HepG2 (cell line): ENCODE measurements at regions of chr21 and their contacts with region 1.

Region 1: DNA sequence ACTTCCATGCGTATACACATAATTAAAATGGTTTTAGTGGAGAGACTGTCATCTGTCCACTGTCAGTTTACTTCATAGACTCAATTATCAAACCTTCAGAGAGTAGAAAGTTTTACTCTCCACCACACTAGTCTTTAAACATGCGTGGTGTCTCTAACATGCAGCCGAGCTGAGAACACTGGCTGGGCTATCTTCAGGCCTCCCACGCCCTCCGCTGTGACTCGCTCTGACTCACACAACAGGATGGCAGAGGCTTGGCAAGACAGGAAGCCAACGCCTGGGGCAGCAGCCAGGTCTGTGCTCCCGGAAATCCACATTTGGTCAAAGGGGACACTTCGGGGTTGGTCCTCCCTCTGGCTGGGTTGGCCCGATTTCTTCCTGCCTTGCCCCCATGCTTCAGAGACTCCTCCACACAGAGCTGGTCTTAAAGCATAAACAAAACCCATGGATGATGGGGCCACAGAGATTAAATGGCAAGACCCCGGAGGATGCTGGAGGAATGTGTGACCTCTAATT is 22.7 kb upstream of the IFNGR2 start:
- DNase-seq: peak; percentile 75
- ATAC-seq: peak; percentile 72
- H3K4me3 ChIP-seq: peak overlapping the region in 1 of 3 experiments; percentile 15; a peak in 1 of 6 replicates
- H3K27ac ChIP-seq: no peak overlapping the region
- H3K4me1 ChIP-seq: peaks cover 57% of the 10 kb centered on the region
- H3K27me3 ChIP-seq: no peaks in the 10 kb centered on the region
- CTCF ChIP-seq: no peak
- EP300 ChIP-seq: 0 out of 4 replicates have a peak, but pooled peaks of 1 of the 2 experiments have one; percentile 6
- POLR2A ChIP-seq: no peak
- RAD21 ChIP-seq: no peak

Region 2: GRCh38 chr21:33403779-33404585 is 23.4 kb after region 1 on chr21:
- CTCF ChIA-PET with region 1: no interaction called
- POLR2A ChIA-PET with region 1: interaction called, 18 read pairs
- in situ Hi-C with region 1: no loop called
- intact Hi-C with region 1: loop called (anchors 1 kb)
- DNase-seq: peak; percentile 26
- ATAC-seq: peak; percentile 76
- H3K4me3 ChIP-seq: peak overlapping the region; percentile 85 to 97 (median 95)
- H3K27ac ChIP-seq: peak overlapping the region; percentile 79
- H3K4me1 ChIP-seq: peaks cover 53% of the 10 kb centered on the region
- H3K27me3 ChIP-seq: no peaks in the 10 kb centered on the region; a peak in 1 of 5 replicates
- CTCF ChIP-seq: no peak
- EP300 ChIP-seq: no peak
- POLR2A ChIP-seq: peak; percentile 42 to 48; a peak in 3 of 4 replicates
- RAD21 ChIP-seq: no peak

Region 3: DNA sequence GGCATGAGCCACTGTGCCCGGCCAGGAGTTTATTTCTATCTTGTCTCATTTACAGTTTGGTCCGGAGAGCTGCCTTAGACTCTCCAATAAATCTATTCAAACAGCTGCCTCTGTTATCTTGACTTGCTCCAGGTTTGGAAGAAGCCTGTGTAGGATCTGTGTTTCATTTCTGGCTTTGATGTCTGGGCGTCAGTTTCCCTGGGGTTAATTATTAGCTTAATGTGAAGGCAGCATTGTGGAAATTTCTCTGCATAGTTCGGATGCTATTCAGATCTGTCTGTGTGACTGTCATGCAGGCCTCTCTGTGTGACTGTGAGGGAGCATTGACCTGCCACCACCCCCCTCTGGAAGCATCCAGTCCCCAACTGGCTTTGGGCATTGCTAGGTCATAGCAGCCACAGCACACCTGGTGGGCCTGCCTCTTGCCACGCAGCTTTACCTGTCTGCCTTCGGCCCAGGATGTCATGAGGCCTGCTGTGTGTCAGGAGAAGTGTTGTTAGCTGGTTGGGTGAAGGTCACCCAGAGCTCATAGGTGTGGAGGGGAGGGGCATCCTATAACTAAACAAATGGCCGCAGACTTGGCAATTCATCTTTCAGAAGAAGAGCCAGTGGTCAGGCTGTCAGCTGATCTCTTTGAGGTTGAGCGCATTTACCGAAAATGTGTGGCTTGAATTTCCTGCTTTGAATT is 32.4 kb after region 1 on chr21:
- CTCF ChIA-PET with region 1: no interaction called
- POLR2A ChIA-PET with region 1: interaction called, 18 read pairs
- in situ Hi-C with region 1: no loop called
- intact Hi-C with region 1: loop called (anchors 2 kb)
- DNase-seq: peak; percentile 98
- ATAC-seq: peak; percentile 96
- H3K4me3 ChIP-seq: peak overlapping the region; percentile 1 to 51 (median 37); a peak in 5 of 6 replicates
- H3K27ac ChIP-seq: peak overlapping the region; percentile 96
- H3K4me1 ChIP-seq: peaks cover 79% of the 10 kb centered on the region
- H3K27me3 ChIP-seq: no peaks in the 10 kb centered on the region
- CTCF ChIP-seq: no peak
- EP300 ChIP-seq: peak in 1 of 2 experiments; percentile 71; a peak in 2 of 4 replicates
- POLR2A ChIP-seq: peak; percentile 59 to 62
- RAD21 ChIP-seq: no peak; the same call in 1 of the 2 replicates

Region 4: GRCh38 chr21:33441489-33442477 is 61.2 kb after region 1 on chr21:
- CTCF ChIA-PET with region 1: no interaction called
- POLR2A ChIA-PET with region 1: interaction called, 5 read pairs
- in situ Hi-C with region 1: no loop called
- intact Hi-C with region 1: loop called (anchors 1 kb)
- DNase-seq: no peak
- ATAC-seq: no peak
- H3K4me3 ChIP-seq: no peak overlapping the region
- H3K27ac ChIP-seq: no peak overlapping the region
- H3K4me1 ChIP-seq: no peaks in the 10 kb centered on the region
- H3K27me3 ChIP-seq: no peaks in the 10 kb centered on the region
- CTCF ChIP-seq: no peak
- EP300 ChIP-seq: no peak
- POLR2A ChIP-seq: no peak
- RAD21 ChIP-seq: no peak